ENCODE measurements at regions of chr1 and their contacts with region 1.

Region 1: DNA sequence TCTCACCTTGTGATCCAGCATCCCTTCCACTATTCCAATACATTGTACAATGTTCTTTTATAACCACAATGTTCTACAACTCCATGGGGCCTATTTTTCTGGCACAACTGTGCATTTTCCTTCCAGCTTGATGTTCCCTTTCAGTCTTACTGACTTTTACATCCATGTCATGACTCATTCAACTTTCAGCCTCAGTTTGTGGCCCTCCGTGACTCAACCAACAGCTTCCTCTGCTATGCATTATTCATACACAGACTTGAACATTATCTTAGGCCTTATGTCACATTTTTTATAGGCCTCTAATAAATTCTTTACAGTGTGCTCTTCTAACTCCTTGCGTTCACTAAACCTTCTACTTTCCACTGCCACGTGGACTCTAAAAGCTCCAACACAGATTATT is 119.4 kb upstream of the PRMT6 start:
- DNase-seq: no peak
- H3K4me3 ChIP-seq: no peak overlapping the region
- H3K27ac ChIP-seq: no peak overlapping the region
- H3K4me1 ChIP-seq: no peaks in the 10 kb centered on the region
- CTCF ChIP-seq: no peak

Region 2: DNA sequence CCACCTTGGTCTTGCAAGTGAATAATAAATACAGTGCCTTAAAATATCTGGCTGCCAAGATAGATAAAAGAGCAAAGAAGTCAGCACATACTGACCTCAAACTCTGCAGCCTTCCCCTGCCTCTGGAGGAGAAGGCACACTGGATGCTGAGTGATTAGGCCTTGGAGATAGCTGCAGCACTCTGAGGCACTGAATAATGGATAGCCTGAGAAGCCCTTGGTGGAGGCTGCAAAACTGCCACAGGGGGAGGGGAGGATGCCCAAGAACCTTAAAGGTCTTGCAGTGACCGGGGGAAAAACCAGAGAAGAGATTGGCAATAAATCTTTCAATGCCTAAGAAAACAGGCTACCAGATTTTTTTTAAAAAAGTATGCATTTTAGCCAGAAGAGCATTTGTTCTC is 48.0 kb before region 1 on chr1:
- CTCF ChIA-PET with region 1: no interaction called
- POLR2A ChIA-PET with region 1: no interaction called
- intact Hi-C with region 1: loop called (anchors 5 kb)
- DNase-seq: no peak
- H3K4me3 ChIP-seq: no peak overlapping the region
- H3K27ac ChIP-seq: no peak overlapping the region
- H3K4me1 ChIP-seq: no peaks in the 10 kb centered on the region
- CTCF ChIP-seq: no peak